HCT116 (cell line): ENCODE measurements at regions of chr4 and their contacts with region 1.

Region 1: GRCh38 chr4:6390356-6390755 is 82.1 kb downstream of the PPP2R2C start:
- DNase-seq: no peak
- ATAC-seq: no peak
- H3K4me3 ChIP-seq: no peak overlapping the region
- H3K27ac ChIP-seq: no peak overlapping the region; the same call in 1 of the 2 replicates
- H3K4me1 ChIP-seq: peaks cover 15 to 40% of the 10 kb centered on the region in 2 experiments
- H3K27me3 ChIP-seq: no peaks in the 10 kb centered on the region
- CTCF ChIP-seq: no peak
- POLR2A ChIP-seq: no peak
- RAD21 ChIP-seq: no peak

Region 2: DNA sequence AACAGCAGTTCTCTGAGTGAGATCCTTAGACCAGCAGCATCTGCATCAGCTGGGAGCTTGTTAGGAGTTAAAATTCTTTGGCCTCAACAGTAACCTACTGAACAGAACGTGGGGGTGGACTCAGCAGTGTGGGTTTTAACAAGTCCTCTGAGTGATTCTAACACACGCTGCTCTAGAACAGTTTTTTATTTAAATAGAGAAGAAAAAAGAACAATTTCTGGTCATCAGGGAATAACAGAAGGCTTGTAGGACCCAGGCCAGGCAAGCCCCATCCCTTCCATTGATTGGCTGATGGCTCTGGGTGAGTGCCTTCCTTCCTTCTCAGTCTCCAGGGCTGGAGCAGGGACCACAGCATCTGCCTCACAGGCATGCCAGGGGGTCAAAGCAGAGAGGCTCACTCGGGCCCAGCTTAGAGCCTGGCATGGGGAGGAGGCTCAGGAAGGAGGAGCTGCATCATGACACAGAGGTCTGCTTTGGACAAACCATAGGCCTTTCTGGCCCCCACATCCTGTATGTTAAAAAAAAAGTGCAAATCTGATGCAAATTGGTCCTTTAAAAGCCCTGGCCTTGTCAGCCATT is 246.7 kb before region 1 on chr4:
- CTCF ChIA-PET with region 1: no interaction called
- POLR2A ChIA-PET with region 1: no interaction called
- RAD21 ChIA-PET with region 1: no interaction called
- intact Hi-C with region 1: no loop called
- DNase-seq: no peak
- ATAC-seq: no peak
- H3K4me3 ChIP-seq: no peak overlapping the region
- H3K27ac ChIP-seq: no peak overlapping the region
- H3K4me1 ChIP-seq: no peaks in the 10 kb centered on the region
- H3K27me3 ChIP-seq: no peaks in the 10 kb centered on the region
- CTCF ChIP-seq: no peak
- POLR2A ChIP-seq: no peak
- RAD21 ChIP-seq: no peak

Region 3: GRCh38 chr4:6464842-6465588 is 74.7 kb after region 1 on chr4:
- CTCF ChIA-PET with region 1: no interaction called
- POLR2A ChIA-PET with region 1: no interaction called
- RAD21 ChIA-PET with region 1: no interaction called
- intact Hi-C with region 1: loop called (anchors 5 kb)
- DNase-seq: no peak
- ATAC-seq: peak; percentile 85
- H3K4me3 ChIP-seq: no peak overlapping the region
- H3K27ac ChIP-seq: no peak overlapping the region
- H3K4me1 ChIP-seq: peaks cover 0 to 7% of the 10 kb centered on the region in 2 experiments; a peak in 2 of 4 replicates
- H3K27me3 ChIP-seq: no peaks in the 10 kb centered on the region
- CTCF ChIP-seq: no peak
- POLR2A ChIP-seq: no peak
- RAD21 ChIP-seq: no peak

Region 4: GRCh38 chr4:6582889-6583490 is 192.6 kb after region 1 on chr4:
- CTCF ChIA-PET with region 1: no interaction called
- POLR2A ChIA-PET with region 1: no interaction called
- RAD21 ChIA-PET with region 1: no interaction called
- intact Hi-C with region 1: no loop called
- DNase-seq: peak; percentile 40
- ATAC-seq: peak; percentile 92
- H3K4me3 ChIP-seq: no peak overlapping the region
- H3K27ac ChIP-seq: no peak overlapping the region
- H3K4me1 ChIP-seq: no peaks in the 10 kb centered on the region
- H3K27me3 ChIP-seq: no peaks in the 10 kb centered on the region
- CTCF ChIP-seq: no peak
- POLR2A ChIP-seq: no peak
- RAD21 ChIP-seq: no peak